ENCODE measurements at regions of chr11 and their contacts with region 1.

Region 1: DNA sequence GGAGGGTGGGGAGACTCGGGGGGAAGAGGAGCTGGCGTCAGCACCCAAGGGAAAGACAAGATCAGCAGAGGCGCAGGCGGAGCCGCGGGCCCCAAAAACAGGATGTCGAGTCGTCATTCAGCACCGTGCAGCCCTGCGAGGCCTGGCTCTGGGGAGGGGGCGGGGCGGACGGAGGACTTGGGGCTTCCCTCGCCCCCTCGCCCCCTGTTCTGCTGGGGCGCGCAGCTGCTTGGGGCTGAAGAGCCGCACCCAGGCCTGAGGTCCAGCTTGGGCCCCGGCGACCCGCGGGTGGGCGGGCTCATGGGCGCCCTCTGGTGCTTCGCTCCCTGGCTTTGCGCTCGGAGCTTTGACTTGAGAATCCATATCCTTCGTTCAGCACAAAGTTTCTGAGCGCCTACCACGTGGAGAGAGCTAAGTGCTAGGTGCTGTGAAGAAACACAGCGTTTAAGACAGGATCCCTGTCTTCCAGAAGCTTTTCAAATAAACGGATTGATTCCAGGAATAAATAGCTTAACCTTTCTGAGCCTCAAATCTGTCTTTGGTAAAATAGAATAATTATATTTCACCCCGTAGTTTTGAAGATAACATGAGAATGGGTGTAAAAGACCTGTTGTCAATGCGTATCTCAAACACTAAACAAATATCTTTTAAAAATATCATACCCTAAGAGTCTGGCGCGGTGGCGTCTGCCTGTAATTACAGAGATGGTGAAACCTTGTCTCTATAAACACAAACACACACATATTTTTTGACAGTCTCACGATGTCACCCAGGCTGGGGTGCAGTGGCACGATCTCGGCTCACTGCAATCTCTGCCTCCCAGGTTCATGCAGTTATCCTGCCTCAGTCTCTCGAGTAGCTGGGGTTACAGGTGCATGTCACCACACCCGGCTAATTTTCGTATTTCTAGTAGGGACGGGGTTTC is 929 bp upstream of the RHOG start:
- DNase-seq: peak; percentile 38
- H3K4me3 ChIP-seq: peak overlapping the region; percentile 72
- H3K27ac ChIP-seq: peak overlapping the region; percentile 89
- H3K27me3 ChIP-seq: no peaks in the 10 kb centered on the region
- CTCF ChIP-seq: peak; percentile 84

Region 2: GRCh38 chr11:3824714-3825472 is 16.8 kb before region 1 on chr11:
- CTCF ChIA-PET with region 1: interaction called, 13 read pairs
- POLR2A ChIA-PET with region 1: interaction called, 4 read pairs
- DNase-seq: no peak
- H3K4me3 ChIP-seq: no peak overlapping the region
- H3K27ac ChIP-seq: peak overlapping the region; percentile 11
- H3K27me3 ChIP-seq: no peaks in the 10 kb centered on the region
- CTCF ChIP-seq: peak; percentile 53

Region 3: DNA sequence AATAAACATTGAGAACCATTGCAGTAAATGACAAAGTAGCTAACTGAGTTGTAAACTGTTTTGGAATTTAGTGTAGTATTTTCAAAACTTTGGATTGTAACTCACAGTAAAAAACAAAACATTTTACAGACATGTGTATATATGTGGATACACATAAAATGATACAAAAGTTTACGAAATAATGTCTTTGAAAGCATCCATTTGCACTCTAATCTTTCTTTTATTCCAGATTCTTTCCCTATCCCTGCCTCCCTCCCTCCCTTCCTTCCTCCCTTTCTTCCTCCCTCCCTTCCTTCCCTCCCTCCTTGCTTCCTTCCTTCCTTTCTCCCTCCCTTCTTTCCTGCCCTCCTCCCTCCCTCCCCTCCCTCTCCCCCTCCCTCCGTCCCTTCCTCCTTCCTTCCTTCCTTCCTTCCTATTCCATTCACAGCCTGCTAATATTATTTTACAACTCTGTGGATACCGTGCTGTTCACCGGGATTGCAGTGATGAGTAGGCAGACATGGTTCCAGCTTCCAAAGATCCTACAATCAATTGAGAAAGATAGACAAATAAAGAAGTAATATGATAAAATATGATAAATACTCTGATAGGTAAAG is 256.4 kb after region 1 on chr11:
- CTCF ChIA-PET with region 1: interaction called, 11 read pairs
- POLR2A ChIA-PET with region 1: no interaction called
- DNase-seq: no peak
- H3K4me3 ChIP-seq: no peak overlapping the region
- H3K27ac ChIP-seq: no peak overlapping the region
- H3K27me3 ChIP-seq: no peaks in the 10 kb centered on the region
- CTCF ChIP-seq: no peak

Region 4: GRCh38 chr11:4178813-4179662 is 337.4 kb after region 1 on chr11:
- CTCF ChIA-PET with region 1: no interaction called
- POLR2A ChIA-PET with region 1: no interaction called
- DNase-seq: no peak
- H3K4me3 ChIP-seq: no peak overlapping the region
- H3K27ac ChIP-seq: no peak overlapping the region
- H3K27me3 ChIP-seq: peaks cover 6% of the 10 kb centered on the region
- CTCF ChIP-seq: no peak

Region 5: GRCh38 chr11:4636962-4637661 is 795.4 kb after region 1 on chr11 and contains the start of gene OR51D1:
- CTCF ChIA-PET with region 1: no interaction called
- POLR2A ChIA-PET with region 1: no interaction called
- DNase-seq: peak; percentile 47
- H3K4me3 ChIP-seq: peak within 1 kb of the TSS; percentile 54
- H3K27ac ChIP-seq: no peak within 1 kb of the TSS
- H3K27me3 ChIP-seq: no peaks in the 10 kb centered on the region
- CTCF ChIP-seq: peak; percentile 95
- polyA plus RNA-seq, gene OR51D1: not detected in 2 replicates

Measured in AG04450 (cell line).